Testis (tissue), 5 donors: ENCODE measurements at regions of chr1 and their contacts with region 1.

Region 1: GRCh38 chr1:46991083-46991923 is 32.2 kb upstream of the CYP4X1 start:
- DNase-seq: no peak
- H3K4me3 ChIP-seq: no peak overlapping the region
- H3K27ac ChIP-seq: no peak overlapping the region
- H3K4me1 ChIP-seq: no peaks in the 10 kb centered on the region
- H3K27me3 ChIP-seq: no peaks in the 10 kb centered on the region
- CTCF ChIP-seq: peak in 1 of 3 experiments; percentile 27
- POLR2A ChIP-seq: no peak

Region 2: GRCh38 chr1:46747683-46748288 is 243.5 kb before region 1 on chr1:
- intact Hi-C with region 1: loop called (anchors 10 kb)
- DNase-seq: peak; percentile 78
- H3K4me3 ChIP-seq: no peak overlapping the region
- H3K27ac ChIP-seq: no peak overlapping the region
- H3K4me1 ChIP-seq: no peaks in the 10 kb centered on the region
- H3K27me3 ChIP-seq: no peaks in the 10 kb centered on the region
- CTCF ChIP-seq: peak; percentile 55 to 74 (median 62)
- POLR2A ChIP-seq: no peak